ENCODE measurements at regions of chr1 and their contacts with region 1.

Region 1: DNA sequence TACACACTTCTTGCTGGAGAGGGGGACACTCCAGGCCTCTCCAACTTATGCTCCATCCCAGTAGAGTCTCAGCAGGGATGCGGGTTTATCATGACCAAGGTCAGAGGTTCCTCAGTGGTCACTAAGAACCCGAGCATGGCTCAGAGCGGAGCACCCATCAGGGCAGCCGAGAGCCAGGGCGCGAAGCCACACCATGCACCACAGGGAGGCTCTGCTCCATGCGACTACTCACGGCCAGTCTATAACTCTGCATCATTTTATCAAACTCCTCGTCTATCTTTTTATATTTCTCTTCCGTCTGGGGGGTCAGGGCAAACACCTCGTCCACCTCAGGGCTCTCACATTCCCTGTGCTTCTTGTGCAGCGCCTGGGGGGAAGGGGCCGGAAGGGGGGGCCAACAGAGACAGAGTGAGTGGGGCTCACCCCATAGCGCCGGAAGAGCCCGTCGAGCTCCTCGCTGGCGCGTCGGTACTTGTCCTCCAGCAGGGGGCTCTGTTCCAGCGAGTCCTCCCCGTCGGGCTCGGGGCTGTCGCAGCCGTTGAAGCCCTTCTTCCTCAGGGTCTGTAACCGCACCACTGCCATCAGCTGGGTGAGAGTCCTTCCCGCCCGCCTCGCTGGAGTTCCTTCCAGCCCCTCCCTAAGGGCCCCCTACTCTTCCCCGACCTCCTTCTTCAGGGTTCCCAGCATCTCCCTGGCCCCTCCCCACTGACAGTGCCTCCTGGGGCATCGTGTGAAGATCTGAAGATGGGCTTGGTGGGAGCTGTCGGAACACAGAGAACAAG is 20.0 kb downstream of the MEF2D start:
- DNase-seq: peak in 1 of 2 experiments; percentile 88
- H3K4me3 ChIP-seq: no peak overlapping the region
- H3K27ac ChIP-seq: no peak overlapping the region
- H3K4me1 ChIP-seq: peaks cover 0 to 16% (median 11%) of the 10 kb centered on the region in 4 experiments; a peak in 6 of 7 replicates
- H3K27me3 ChIP-seq: no peaks in the 10 kb centered on the region
- CTCF ChIP-seq: peak; percentile 81 to 88 (median 84)
- EP300 ChIP-seq: 0 out of 3 replicates have a peak, but pooled peaks of 1 of the 2 experiments have one; percentile 31
- POLR2A ChIP-seq: no peak
- RAD21 ChIP-seq: peak; percentile 68 to 76

Region 2: GRCh38 chr1:156435545-156436141 is 45.0 kb before region 1 on chr1:
- CTCF ChIA-PET with region 1: no interaction called
- POLR2A ChIA-PET with region 1: no interaction called
- DNase-seq: no peak
- H3K4me3 ChIP-seq: peak overlapping the region in 1 of 4 experiments; percentile 39; a peak in 2 of 8 replicates
- H3K27ac ChIP-seq: no peak overlapping the region
- H3K4me1 ChIP-seq: peaks cover 13 to 44% (median 17%) of the 10 kb centered on the region in 4 experiments
- H3K27me3 ChIP-seq: peaks cover 86 to 100% (median 98%) of the 10 kb centered on the region in 4 experiments
- CTCF ChIP-seq: no peak
- EP300 ChIP-seq: no peak
- POLR2A ChIP-seq: no peak
- RAD21 ChIP-seq: no peak

Region 3: GRCh38 chr1:156456622-156457465 is 23.8 kb before region 1 on chr1:
- CTCF ChIA-PET with region 1: interaction called, 62 read pairs
- POLR2A ChIA-PET with region 1: interaction called, 7 read pairs
- DNase-seq: peak; percentile 95 to 98
- H3K4me3 ChIP-seq: peak overlapping the region; percentile 57 to 83 (median 69)
- H3K27ac ChIP-seq: peak overlapping the region; percentile 77
- H3K4me1 ChIP-seq: peaks cover 0 to 5% (median under 1%) of the 10 kb centered on the region in 4 experiments; a peak in 2 of 7 replicates
- H3K27me3 ChIP-seq: no peaks in the 10 kb centered on the region
- CTCF ChIP-seq: no peak
- EP300 ChIP-seq: no peak
- POLR2A ChIP-seq: peak; percentile 47 to 87
- RAD21 ChIP-seq: no peak

Region 4: GRCh38 chr1:156500797-156501499 is 20.3 kb after region 1 on chr1:
- CTCF ChIA-PET with region 1: interaction called, 236 read pairs
- POLR2A ChIA-PET with region 1: interaction called, 166 read pairs
- DNase-seq: peak; percentile 75 to 96
- H3K4me3 ChIP-seq: peak overlapping the region; percentile 74 to 96 (median 83)
- H3K27ac ChIP-seq: peak overlapping the region; percentile 88
- H3K4me1 ChIP-seq: peaks cover 37 to 54% (median 43%) of the 10 kb centered on the region in 4 experiments
- H3K27me3 ChIP-seq: no peaks in the 10 kb centered on the region; a peak in 1 of 7 replicates
- CTCF ChIP-seq: peak; percentile 23 to 46 (median 39)
- EP300 ChIP-seq: no peak
- POLR2A ChIP-seq: peak in 1 of 2 experiments; percentile 64; a peak in 1 of 3 replicates
- RAD21 ChIP-seq: peak in 1 of 2 experiments; percentile 25; a peak in 1 of 4 replicates

Region 5: DNA sequence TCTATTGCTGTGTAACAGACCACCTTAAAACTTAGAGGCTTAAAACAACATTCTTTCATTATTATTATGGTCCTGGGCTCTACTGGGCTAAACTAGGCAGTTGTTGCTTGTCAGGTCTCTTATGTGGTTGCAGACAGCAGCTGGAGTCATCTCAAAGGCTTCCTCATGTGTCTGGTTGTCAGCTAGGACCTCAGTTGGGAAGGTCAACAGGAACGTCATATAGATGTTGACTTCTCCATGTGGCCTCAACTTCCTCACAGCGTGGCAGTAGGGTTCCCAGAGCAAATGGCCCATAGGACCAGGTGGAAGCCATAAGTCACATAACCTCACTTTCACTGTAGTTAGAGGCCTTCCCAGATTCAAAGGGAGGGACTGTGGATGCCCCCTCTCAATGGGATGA is 35.4 kb after region 1 on chr1:
- CTCF ChIA-PET with region 1: interaction called, 12 read pairs
- POLR2A ChIA-PET with region 1: no interaction called
- DNase-seq: no peak
- H3K4me3 ChIP-seq: no peak overlapping the region
- H3K27ac ChIP-seq: no peak overlapping the region
- H3K4me1 ChIP-seq: no peaks in the 10 kb centered on the region
- H3K27me3 ChIP-seq: no peaks in the 10 kb centered on the region
- CTCF ChIP-seq: no peak
- EP300 ChIP-seq: no peak
- POLR2A ChIP-seq: no peak
- RAD21 ChIP-seq: no peak

Region 6: GRCh38 chr1:156551866-156552265 is 71.3 kb after region 1 on chr1:
- CTCF ChIA-PET with region 1: interaction called, 33 read pairs
- POLR2A ChIA-PET with region 1: no interaction called
- DNase-seq: no peak
- H3K4me3 ChIP-seq: no peak overlapping the region
- H3K27ac ChIP-seq: no peak overlapping the region
- H3K4me1 ChIP-seq: no peaks in the 10 kb centered on the region
- H3K27me3 ChIP-seq: no peaks in the 10 kb centered on the region
- CTCF ChIP-seq: no peak
- EP300 ChIP-seq: no peak
- POLR2A ChIP-seq: no peak
- RAD21 ChIP-seq: no peak

Measured in H1 (cell line).